Heart right ventricle (tissue), 16 donors: ENCODE measurements at regions of chr1 and their contacts with region 1.

Region 1: DNA sequence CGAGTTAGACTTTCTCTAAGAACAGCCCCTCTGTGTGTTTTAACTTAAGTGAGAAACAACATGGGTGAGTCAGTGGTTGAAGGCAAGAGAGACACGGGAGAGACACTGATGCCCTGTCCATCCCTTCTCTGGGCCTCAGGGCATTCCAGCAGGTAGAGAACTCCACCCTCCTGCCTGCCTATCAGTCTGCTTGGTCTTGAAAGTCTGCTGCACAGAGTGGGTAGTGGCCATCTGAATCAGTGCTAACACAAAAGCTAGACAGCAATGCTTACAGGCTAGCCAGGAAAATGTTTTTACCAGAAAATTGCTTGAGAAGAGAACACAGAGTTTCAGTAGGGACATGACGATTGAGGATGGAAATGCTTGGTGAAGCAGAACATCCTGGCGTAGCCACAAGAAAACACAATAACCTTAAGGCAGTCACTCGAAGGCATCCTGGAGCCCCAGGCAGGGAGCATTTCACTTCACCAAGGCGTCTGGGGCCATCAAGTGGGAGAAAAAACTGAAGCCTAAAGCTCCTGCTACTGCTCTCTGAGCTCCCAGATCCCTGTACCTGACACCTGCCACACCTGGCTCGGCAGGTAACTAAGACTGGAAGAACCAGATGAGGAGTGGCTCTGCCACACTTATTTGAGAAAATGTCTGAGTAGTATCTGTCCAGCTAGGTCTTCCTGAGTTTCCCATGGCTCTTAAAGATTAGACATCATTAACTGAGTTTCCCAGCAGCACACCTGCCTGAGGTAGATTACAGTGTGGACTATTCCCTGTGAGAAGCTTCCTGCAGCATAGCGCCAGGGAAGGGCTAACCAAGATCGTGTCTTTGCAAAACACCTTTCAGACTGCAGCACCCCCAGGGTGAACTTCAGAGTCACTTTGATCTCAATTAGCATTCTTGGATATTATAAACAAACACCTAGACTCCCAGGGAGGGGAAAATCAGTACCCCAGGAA is 18.1 kb upstream of the LBR start:
- DNase-seq: no peak
- ATAC-seq: peak in 3 of 8 donors; percentile 19 to 36 (median 31)
- H3K4me3 ChIP-seq: peak overlapping the region in 1 of 10 donors; percentile 11
- H3K27ac ChIP-seq: peak overlapping the region; percentile 62 to 92 (median 80)
- H3K4me1 ChIP-seq: peaks cover 0 to 76% (median 51%) of the 10 kb centered on the region in 9 donors
- H3K27me3 ChIP-seq: no peaks in the 10 kb centered on the region
- CTCF ChIP-seq: no peak

Region 2: GRCh38 chr1:225428068-225428880 is 17.6 kb before region 1 on chr1:
- intact Hi-C with region 1: loop called in 1 of 10 experiments (anchors 2 kb)
- DNase-seq: peak; percentile 92 to 93
- ATAC-seq: peak; percentile 96 to 99 (median 97)
- H3K4me3 ChIP-seq: peak overlapping the region; percentile 64 to 98 (median 90)
- H3K27ac ChIP-seq: peak overlapping the region; percentile 47 to 97 (median 90)
- H3K4me1 ChIP-seq: peaks cover 9 to 48% (median 41%) of the 10 kb centered on the region in 9 donors
- H3K27me3 ChIP-seq: no peaks in the 10 kb centered on the region
- CTCF ChIP-seq: no peak

Region 3: GRCh38 chr1:225462714-225463574 is 17.0 kb after region 1 on chr1:
- intact Hi-C with region 1: loop called in 1 of 10 experiments (anchors 2 kb)
- DNase-seq: no peak
- ATAC-seq: no peak
- H3K4me3 ChIP-seq: no peak overlapping the region
- H3K27ac ChIP-seq: no peak overlapping the region
- H3K4me1 ChIP-seq: peaks cover 2 to 70% (median 58%) of the 10 kb centered on the region in 9 donors
- H3K27me3 ChIP-seq: no peaks in the 10 kb centered on the region
- CTCF ChIP-seq: no peak

Region 4: DNA sequence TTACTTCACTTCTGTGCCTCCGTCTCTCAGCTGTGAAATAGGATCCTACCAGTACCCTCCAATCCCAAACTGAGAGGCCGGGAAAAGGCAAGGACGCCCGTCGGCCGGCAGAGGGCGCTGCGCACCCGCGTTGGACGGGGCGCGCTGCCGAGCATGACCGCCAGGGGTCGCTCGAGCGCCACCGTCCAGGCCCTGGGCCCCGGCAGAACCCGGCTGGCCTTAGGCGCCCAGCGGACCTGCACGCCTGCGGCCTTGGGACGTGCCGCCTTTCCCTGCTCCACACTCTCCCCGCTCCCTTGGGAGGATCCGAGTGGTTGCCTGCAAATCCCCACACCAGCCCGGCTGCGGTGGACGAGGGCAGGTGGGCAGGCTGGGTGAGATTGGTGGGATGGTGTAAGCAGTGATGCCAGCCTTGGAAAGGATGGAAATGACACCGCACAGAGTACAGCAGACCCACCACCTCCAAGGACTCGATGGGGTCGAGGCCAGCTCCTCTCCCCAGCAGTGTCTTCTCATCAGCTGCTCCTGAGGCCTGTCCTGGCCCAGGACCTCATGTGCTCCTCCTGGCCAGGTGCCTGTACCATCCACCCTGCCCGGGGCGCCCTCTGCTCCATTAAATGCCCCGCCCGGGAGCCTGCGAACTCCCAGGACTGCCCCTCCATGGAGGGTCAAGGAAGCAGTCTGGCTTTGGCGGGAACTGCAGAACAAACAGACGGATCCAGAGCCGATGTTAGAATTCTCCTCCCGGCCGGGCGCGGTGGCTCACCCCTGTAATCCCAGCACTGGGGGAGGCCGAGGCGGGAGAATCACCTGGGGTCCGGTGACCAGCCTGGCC is 29.3 kb after region 1 on chr1:
- intact Hi-C with region 1: no loop called
- DNase-seq: peak in 1 of 2 donors; percentile 69
- ATAC-seq: peak; percentile 84 to 90 (median 90)
- H3K4me3 ChIP-seq: peak overlapping the region in 4 of 10 donors; percentile 19 to 35 (median 26)
- H3K27ac ChIP-seq: no peak overlapping the region
- H3K4me1 ChIP-seq: peaks cover 0 to 9% (median 6%) of the 10 kb centered on the region in 9 donors
- H3K27me3 ChIP-seq: no peaks in the 10 kb centered on the region
- CTCF ChIP-seq: peak; percentile 100

Region 5: DNA sequence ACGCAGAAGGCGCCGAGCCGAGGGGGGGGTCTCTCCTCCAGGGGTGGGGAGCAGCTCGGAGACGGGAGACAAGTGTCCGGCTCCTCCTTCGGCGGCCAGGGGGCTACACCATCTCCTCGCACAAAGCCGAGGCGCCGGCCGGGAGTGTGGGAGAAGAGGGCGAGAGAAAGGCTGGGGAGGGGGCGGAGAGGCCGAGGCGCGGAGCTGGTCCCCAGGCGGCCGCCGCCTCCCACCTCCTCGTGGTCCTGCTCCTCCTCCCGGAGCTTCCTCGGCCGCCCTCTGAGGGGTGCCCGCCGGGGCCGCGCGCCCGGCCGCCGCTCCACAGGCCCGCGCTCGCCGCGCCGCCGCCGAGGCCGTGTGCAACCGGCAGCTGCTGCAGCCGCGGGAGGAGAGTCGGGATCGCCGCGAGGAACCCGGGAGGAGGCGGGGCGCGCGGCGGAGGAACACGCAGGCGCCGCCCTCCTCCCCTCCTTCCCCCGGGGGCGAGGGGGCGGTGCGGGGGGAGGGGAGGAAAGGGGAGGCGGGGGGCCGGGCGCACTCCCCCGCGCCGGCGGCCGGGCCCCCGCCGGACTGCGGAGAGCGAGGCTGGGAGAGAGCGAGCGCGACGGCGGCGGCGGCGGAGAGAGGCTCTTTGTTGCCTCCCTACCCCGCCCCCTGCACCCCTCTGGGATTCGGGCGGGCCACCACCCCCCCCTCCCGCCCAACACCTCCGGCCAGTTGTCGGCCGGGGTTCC is 207.0 kb after region 1 on chr1 and contains the start of gene ENAH:
- intact Hi-C with region 1: no loop called
- DNase-seq: peak; percentile 84 to 87
- ATAC-seq: peak; percentile 79 to 90 (median 88)
- H3K4me3 ChIP-seq: peak within 1 kb of the TSS; percentile 86 to 99 (median 94)
- H3K27ac ChIP-seq: peak within 1 kb of the TSS; percentile 95 to 100 (median 98)
- H3K4me1 ChIP-seq: peaks cover 0 to 59% (median 45%) of the 10 kb centered on the region in 9 donors
- H3K27me3 ChIP-seq: peaks cover 0 to 50% (median 0%) of the 10 kb centered on the region in 7 donors
- CTCF ChIP-seq: no peak
- total RNA-seq, gene ENAH: 63.3 to 201 (median 115) TPM